ENCODE measurements at regions of chr4 and their contacts with region 1.

Region 1: GRCh38 chr4:10959586-10959985 is 275.0 kb upstream of the CLNK start:
- DNase-seq: no peak
- H3K4me3 ChIP-seq: no peak overlapping the region
- H3K27ac ChIP-seq: no peak overlapping the region
- H3K4me1 ChIP-seq: peaks cover 6 to 12% (median 8%) of the 10 kb centered on the region in 4 experiments
- H3K27me3 ChIP-seq: no peaks in the 10 kb centered on the region

Region 2: DNA sequence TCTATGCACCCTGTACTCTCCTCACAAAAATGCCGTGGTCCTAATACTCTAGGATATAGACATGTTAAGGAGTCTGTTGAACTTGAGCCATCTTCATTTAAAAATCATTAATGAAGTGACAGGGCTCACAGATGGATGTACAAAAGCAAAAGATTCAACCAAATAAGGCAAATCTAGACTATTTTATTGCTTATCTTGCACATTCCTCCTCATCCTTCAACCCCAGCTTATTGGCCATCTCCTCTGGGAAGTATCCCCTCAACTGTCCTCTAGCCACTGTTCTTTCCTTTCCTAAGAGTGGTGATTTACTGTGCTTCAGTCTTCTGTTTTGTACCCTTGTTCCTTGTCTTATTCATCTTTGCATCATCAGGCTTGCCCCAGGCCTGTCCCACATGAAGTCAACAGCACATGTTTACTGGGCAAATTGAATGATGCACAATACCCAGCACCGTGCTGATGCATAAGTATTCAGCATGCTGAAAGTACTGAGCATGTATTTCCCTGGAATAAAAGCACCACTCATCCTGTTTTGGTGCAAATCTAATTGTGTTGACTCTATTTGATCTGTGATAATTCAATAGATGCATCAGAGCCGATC is 12.3 kb after region 1 on chr4:
- CTCF ChIA-PET with region 1: interaction called, 20 read pairs
- POLR2A ChIA-PET with region 1: no interaction called
- DNase-seq: no peak
- H3K4me3 ChIP-seq: no peak overlapping the region
- H3K27ac ChIP-seq: no peak overlapping the region
- H3K4me1 ChIP-seq: peaks cover 0 to 13% (median 9%) of the 10 kb centered on the region in 4 experiments
- H3K27me3 ChIP-seq: no peaks in the 10 kb centered on the region

Measured in common myeloid progenitor, CD34-positive (primary cell).